ENCODE measurements at regions of chr10 and their contacts with region 1.

Region 1: GRCh38 chr10:73940634-73941221 is 29.8 kb downstream of the PLAU start:
- DNase-seq: peak; percentile 94
- ATAC-seq: peak; percentile 94

Region 2: GRCh38 chr10:73791871-73792400 is 148.8 kb before region 1 on chr10:
- intact Hi-C with region 1: no loop called
- DNase-seq: peak; percentile 22
- ATAC-seq: no peak

Region 3: GRCh38 chr10:73827346-73828089 is 113.2 kb before region 1 on chr10:
- intact Hi-C with region 1: no loop called
- DNase-seq: no peak
- ATAC-seq: no peak

Region 4: DNA sequence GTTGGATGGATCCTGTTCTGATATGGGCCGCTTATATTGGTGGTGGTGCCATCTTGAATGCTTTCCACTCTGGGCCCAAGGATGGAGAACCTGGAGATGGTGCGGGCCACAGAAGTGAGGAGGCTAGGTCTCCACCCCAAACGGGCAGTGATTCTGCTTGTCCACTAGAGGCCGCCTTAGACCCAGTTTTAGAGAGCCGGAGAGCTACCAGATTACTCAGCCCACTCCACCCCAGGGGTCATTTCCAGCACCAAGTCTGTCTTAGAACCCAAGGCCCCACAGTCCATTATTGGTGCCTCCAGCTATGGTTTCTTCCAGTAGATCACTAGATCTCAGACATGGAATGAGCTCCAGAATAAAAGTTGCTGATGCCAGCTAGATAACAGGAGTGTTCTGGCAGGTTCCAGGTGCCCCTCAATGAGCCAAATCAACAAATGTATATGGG is 54.6 kb before region 1 on chr10:
- intact Hi-C with region 1: loop called (anchors 5 kb)
- DNase-seq: peak; percentile 64
- ATAC-seq: peak; percentile 84

Measured in left ventricle myocardium superior (tissue), 1 donor.